Activated CD4-positive, alpha-beta T cell treated with anti-CD3 and anti-CD28 coated beads, Interleukin-2, amount 10 ng/mL, durations not matched to agents 24 days and 14 days (primary cell): ENCODE measurements at regions of chr5 and their contacts with region 1.

Region 1: DNA sequence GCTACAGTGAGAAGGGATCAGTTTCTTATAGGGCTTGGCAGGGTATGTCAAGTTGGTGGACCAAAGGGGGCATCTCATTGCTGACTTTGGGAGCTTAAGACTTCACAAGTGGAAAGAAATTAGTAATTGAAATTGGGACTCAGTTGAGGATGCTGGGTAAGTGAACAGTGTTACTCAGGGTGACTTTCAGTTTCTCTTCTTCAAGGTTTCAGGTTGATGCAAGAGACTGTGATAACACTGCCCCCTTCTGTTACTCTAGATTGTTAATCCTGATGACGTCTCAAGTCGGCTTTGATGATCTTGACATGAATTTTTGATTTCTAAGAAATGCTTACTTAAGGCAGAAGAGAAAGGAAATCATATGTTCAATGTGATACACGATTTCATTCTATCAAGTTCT is 21.3 kb downstream of the KCTD16 start:
- DNase-seq: peak; percentile 87
- H3K4me3 Mint-ChIP-seq: no peak overlapping the region
- H3K27ac Mint-ChIP-seq: no peak overlapping the region
- H3K4me1 Mint-ChIP-seq: peaks cover 39% of the 10 kb centered on the region
- H3K27me3 Mint-ChIP-seq: peaks cover 2% of the 10 kb centered on the region

Region 2: GRCh38 chr5:142826741-142827732 is 1365.0 kb before region 1 on chr5:
- intact Hi-C with region 1: loop called (anchors 5 kb)
- DNase-seq: peak; percentile 66
- H3K4me3 Mint-ChIP-seq: peak overlapping the region; percentile 32
- H3K27ac Mint-ChIP-seq: peak overlapping the region; percentile 77
- H3K4me1 Mint-ChIP-seq: peaks cover 63% of the 10 kb centered on the region
- H3K27me3 Mint-ChIP-seq: peaks cover 1% of the 10 kb centered on the region

Region 3: DNA sequence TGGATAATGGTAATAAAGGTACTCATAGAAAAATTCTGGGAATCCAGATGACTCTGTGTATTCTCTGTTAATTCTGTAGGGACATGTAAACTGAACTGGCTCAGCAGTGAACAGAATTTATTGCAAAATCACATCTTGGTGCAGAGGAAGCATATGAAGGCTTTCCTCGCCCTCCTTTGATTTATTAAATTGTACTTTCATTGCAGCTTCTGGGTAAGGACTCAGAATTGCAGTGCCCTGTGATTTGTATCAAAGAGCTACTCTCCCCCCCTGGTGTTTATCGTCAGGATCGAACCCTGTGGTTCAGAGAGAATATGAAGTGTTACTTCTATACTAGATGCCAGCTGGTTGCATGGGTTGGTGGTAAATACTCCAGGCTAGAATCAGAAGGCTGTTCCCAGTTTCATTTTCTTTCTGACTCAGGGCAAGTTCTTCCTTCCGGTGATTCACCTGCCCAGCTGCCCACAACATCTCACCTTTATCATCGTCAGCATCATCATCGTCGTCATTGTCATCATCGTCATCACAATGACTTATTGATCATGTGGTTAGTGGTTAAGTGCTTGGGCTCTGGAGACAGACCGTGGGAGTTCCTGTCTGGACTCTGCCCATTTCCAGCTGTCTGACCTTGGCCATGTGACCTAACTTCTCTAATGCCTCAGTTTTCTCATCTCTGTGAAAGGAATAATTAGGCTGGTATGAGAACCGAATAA is 1183.0 kb before region 1 on chr5:
- intact Hi-C with region 1: loop called (anchors 2 kb)
- DNase-seq: peak; percentile 94
- H3K4me3 Mint-ChIP-seq: peak overlapping the region; percentile 36
- H3K27ac Mint-ChIP-seq: peak overlapping the region; percentile 93
- H3K4me1 Mint-ChIP-seq: peaks cover 73% of the 10 kb centered on the region
- H3K27me3 Mint-ChIP-seq: peaks cover 3% of the 10 kb centered on the region

Region 4: DNA sequence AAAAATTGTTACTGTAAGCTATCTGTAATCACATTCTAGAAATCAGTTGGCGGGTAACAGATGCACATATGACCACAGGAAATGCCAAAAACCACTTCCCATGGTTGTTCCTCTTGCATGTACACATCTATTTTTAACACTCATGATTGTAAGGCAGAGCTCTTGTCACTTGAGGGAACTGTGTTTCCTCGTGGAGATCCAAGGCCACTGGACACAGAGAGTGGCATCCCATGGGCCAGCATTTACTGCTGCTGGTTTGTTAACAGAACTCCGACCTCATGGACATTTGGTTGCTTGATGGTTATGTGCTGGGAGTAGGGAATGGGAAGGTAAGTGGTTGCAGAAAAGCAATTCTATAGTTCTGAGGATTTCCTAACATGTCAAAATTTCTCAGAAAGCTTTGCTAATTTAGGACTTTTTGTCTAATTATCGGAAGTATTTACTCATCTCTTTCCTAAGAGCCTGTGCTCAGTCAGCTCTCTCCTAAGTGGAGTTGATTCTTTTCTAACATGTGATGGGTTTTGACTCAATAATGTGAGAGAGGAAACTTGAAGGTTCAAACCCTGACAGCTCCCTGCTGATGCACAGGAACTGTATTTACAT is 586.5 kb before region 1 on chr5:
- intact Hi-C with region 1: loop called (anchors 5 kb)
- DNase-seq: peak; percentile 83
- H3K4me3 Mint-ChIP-seq: peak overlapping the region; percentile 68
- H3K27ac Mint-ChIP-seq: peak overlapping the region; percentile 94
- H3K4me1 Mint-ChIP-seq: peaks cover 31% of the 10 kb centered on the region
- H3K27me3 Mint-ChIP-seq: peaks cover 4% of the 10 kb centered on the region

Region 5: GRCh38 chr5:143896966-143897365 is 295.0 kb before region 1 on chr5:
- intact Hi-C with region 1: loop called (anchors 10 kb)
- DNase-seq: peak; percentile 58
- H3K4me3 Mint-ChIP-seq: no peak overlapping the region
- H3K27ac Mint-ChIP-seq: no peak overlapping the region
- H3K4me1 Mint-ChIP-seq: peaks cover 26% of the 10 kb centered on the region
- H3K27me3 Mint-ChIP-seq: no peaks in the 10 kb centered on the region

Region 6: DNA sequence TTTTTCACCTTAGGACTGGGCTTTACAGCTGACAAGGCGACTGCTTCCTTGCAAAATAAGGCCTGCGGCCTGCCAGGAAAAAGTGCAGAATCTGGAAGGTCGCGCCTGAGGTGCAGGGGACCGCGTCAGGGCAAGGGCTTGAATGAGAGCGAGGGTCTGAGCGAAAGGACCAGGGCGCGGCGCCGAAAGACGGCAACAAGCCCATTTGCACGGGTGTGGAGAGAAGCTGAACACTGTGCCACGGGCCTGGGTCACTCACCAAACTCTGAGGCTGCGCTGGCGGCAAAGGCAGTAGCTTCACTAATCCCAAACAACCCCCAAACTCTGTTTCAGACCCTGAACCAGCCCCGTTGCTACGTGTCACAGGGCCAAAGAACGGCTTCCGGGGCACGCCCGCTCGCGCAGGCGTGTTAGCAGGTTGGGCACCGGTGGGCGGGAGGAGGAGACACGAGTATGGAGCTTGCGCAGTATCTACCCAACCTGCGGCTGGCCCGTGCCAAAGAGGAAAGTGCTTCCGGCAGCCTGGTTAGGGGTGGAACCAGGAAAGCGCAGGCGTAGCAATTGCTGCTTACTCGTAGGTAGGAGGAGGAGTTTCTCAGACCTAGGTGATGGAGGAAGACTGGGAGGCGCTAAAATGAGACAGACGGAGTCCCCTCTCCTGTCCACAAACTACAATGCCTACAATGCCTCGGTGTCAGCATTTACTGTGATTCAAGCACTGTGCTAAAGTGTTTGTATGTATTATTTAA is 21.5 kb before region 1 on chr5 and contains the starts of genes KCTD16 and YIPF5:
- intact Hi-C with region 1: loop called (anchors 1 kb)
- DNase-seq: peak; percentile 99
- H3K4me3 Mint-ChIP-seq: peak within 1 kb of the TSS; percentile 99
- H3K27ac Mint-ChIP-seq: peak within 1 kb of the TSS; percentile 93
- H3K4me1 Mint-ChIP-seq: peaks cover 37% of the 10 kb centered on the region
- H3K27me3 Mint-ChIP-seq: peaks cover 16% of the 10 kb centered on the region
- total RNA-seq, gene KCTD16: not detected in 2 replicates
- total RNA-seq, gene YIPF5: 32.0 and 34.6 TPM in 2 replicates

Region 7: GRCh38 chr5:146188358-146188757 is 1996.4 kb after region 1 on chr5:
- intact Hi-C with region 1: loop called (anchors 10 kb)
- DNase-seq: no peak
- H3K4me3 Mint-ChIP-seq: no peak overlapping the region
- H3K27ac Mint-ChIP-seq: no peak overlapping the region
- H3K4me1 Mint-ChIP-seq: peaks cover 10% of the 10 kb centered on the region
- H3K27me3 Mint-ChIP-seq: peaks cover 14% of the 10 kb centered on the region